ENCODE measurements at regions of chr11 and their contacts with region 1.

Region 1: GRCh38 chr11:15074206-15075161 is 1.1 kb downstream of the CALCB start:
- DNase-seq: peak; percentile 91
- H3K4me3 ChIP-seq: peak overlapping the region; percentile 20
- H3K27ac ChIP-seq: no peak overlapping the region
- H3K4me1 ChIP-seq: peaks cover 12% of the 10 kb centered on the region
- H3K27me3 ChIP-seq: peaks cover 15% of the 10 kb centered on the region
- CTCF ChIP-seq: peak; percentile 64

Region 2: GRCh38 chr11:14727215-14727614 is 347.3 kb before region 1 on chr11:
- intact Hi-C with region 1: no loop called
- DNase-seq: no peak
- H3K4me3 ChIP-seq: no peak overlapping the region
- H3K27ac ChIP-seq: no peak overlapping the region
- H3K4me1 ChIP-seq: no peaks in the 10 kb centered on the region
- H3K27me3 ChIP-seq: no peaks in the 10 kb centered on the region
- CTCF ChIP-seq: no peak

Region 3: GRCh38 chr11:14789879-14790484 is 284.5 kb before region 1 on chr11:
- intact Hi-C with region 1: loop called (anchors 10 kb)
- DNase-seq: no peak
- H3K4me3 ChIP-seq: no peak overlapping the region
- H3K27ac ChIP-seq: no peak overlapping the region
- H3K4me1 ChIP-seq: no peaks in the 10 kb centered on the region
- H3K27me3 ChIP-seq: no peaks in the 10 kb centered on the region
- CTCF ChIP-seq: peak; percentile 48

Region 4: DNA sequence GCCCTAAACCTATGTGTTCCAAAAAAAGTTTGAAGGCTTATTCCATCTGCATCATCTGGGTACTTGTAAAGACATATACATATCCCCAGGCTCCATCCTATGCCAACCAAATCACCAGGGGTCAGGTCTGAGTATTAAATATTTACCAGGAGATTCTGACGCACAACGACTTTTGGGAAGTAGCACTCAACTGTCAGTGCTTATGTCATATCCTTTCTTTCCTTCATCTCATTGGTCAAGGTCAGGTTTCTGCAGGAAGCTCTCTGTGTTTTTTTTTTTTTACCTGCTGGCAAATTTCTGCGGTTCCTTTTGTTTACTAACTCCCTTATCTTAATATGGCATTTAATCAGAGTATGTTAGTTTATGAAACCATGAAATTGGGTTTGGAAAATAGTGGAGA is 159.9 kb before region 1 on chr11:
- intact Hi-C with region 1: loop called (anchors 5 kb)
- DNase-seq: no peak
- H3K4me3 ChIP-seq: no peak overlapping the region
- H3K27ac ChIP-seq: no peak overlapping the region
- H3K4me1 ChIP-seq: no peaks in the 10 kb centered on the region
- H3K27me3 ChIP-seq: no peaks in the 10 kb centered on the region
- CTCF ChIP-seq: no peak